HEK293 (cell line): ENCODE measurements at regions of chr2 and their contacts with region 1.

Region 1: DNA sequence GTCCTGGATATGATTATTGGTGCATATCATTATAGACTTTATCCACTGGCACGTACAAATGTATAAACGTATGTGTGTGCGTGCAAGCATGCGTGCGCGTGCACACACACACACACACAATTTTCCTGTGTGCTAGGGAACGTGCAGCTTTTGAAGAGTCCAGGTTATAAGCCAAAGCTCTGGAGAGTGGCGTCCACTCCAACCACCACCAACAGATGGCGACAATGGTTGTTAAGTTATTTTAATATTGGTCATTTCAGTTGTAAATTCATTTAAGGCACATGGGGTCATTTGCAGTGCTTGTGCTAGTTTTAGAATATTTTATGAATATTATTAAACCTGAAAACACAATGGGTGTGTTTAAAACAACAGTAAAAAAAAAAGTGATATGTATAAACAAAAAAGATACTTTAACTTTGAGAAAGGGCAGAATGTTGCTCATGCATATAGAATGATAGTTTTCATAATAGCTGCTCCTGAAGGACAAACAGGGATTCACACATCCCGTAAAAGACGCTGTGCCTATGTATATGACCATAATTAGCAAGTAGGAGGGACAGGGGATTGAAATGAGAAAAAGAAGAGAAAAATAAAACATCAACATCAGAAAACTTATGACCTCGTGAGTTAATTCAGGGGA is 124.2 kb upstream of the ITGB6 start:
- H3K4me3 ChIP-seq: no peak overlapping the region
- H3K27ac ChIP-seq: no peak overlapping the region
- H3K4me1 ChIP-seq: peaks cover 9% of the 10 kb centered on the region
- CTCF ChIP-seq: no peak

Region 2: GRCh38 chr2:160261732-160262131 is 62.5 kb before region 1 on chr2:
- CTCF ChIA-PET with region 1: no interaction called
- POLR2A ChIA-PET with region 1: no interaction called
- H3K4me3 ChIP-seq: no peak overlapping the region
- H3K27ac ChIP-seq: no peak overlapping the region
- H3K4me1 ChIP-seq: no peaks in the 10 kb centered on the region
- CTCF ChIP-seq: no peak

Region 3: DNA sequence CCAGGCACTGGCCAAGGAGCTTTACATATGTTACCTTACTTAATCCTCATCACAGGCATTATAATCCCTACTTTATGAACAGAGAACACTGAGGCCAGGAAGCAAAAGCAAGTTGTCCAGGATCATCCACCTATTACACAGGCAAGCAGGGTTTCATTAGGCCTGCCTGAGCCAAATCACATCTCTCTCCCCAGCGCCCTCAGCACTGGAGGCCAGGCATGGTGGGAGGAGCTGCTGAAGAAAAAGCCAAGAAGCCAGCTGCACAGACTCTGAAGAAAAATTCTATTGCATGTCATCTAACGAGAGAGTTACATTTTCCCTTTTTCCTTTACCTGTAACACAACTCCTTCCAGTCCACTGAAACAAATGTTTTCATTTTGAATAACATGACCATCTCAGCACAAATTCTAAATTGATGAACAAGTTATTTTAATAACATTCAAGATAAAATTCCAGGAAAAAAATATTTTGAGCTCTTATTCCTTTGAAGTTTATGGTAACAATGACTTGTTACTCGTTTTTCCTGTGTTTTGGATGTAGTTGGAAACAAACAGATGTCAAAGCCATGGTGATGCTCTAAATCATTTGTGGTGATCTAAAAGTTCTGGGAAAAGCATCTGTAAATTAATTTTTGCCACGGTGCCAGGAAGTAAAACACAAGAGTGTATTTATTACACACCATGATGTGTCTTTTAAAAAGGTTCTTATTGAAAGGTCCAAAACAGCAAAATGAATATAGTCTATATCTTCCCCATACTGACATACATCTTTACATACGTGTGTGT is 14.8 kb after region 1 on chr2:
- CTCF ChIA-PET with region 1: interaction called, 11 read pairs
- POLR2A ChIA-PET with region 1: no interaction called
- H3K4me3 ChIP-seq: no peak overlapping the region
- H3K27ac ChIP-seq: no peak overlapping the region
- H3K4me1 ChIP-seq: peaks cover 11% of the 10 kb centered on the region
- CTCF ChIP-seq: no peak

Region 4: DNA sequence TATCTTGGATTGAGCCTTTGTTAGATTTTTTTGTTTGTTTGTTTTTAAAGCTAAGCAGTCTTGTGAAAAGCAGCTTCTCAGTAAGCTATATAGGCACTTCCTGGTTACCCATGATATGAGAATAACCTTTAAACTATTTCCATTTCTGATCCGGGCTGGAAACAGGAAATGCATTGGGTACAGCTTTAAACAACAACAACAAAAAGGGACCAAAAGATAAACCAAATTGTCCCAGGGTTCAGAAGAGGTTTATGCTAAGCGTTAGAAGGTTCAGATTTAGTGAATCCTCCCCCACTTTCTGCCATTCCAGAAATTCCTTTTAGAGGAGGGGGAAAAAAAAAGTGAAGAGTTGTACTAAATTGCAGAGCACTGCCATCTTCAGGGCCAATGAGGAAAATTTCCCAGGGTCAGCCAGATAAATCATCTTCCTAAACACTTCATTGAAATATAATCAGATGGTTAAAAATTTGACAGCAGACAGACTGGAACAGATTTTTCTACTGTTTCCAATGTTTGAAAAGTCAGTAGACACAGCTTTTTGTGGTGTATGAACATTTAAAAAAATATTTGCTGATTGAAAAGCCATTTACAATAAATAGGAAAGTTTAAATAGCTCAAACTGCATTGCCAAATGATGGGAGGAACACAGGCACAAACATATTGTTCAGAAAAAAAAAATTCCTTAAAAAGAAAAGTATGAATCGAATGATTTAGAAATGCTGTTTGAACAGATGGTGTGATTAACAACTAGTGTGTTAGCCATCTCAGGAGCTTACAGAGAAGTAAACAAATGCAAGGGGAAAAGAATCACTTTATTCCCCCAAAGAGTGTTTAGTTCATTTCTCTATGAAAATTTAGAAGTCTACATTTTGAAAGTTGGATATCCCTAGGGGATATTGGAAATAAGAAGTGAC is 646.0 kb after region 1 on chr2:
- CTCF ChIA-PET with region 1: interaction called, 19 read pairs
- POLR2A ChIA-PET with region 1: no interaction called
- H3K4me3 ChIP-seq: no peak overlapping the region
- H3K27ac ChIP-seq: no peak overlapping the region
- H3K4me1 ChIP-seq: no peaks in the 10 kb centered on the region
- CTCF ChIP-seq: peak; percentile 53; the same call in 1 of the 2 replicates